T-cell (primary cell): ENCODE measurements at regions of chr10 and their contacts with region 1.

Region 1: GRCh38 chr10:6401562-6402348 is 178.3 kb downstream of the PRKCQ start:
- DNase-seq: peak; percentile 13 to 83 (median 44)
- ATAC-seq: peak; percentile 85 to 93 (median 88)
- H3K4me3 ChIP-seq: no peak overlapping the region
- H3K4me3 Mint-ChIP-seq: peak overlapping the region; percentile 1 to 25 (median 17)
- H3K27ac ChIP-seq: no peak overlapping the region
- H3K27ac Mint-ChIP-seq: peak overlapping the region; percentile 47 to 53
- H3K4me1 ChIP-seq: peaks cover 3 to 7% of the 10 kb centered on the region in 2 experiments
- H3K4me1 Mint-ChIP-seq: peaks cover 21 to 34% (median 29%) of the 10 kb centered on the region in 3 donors
- H3K27me3 ChIP-seq: peaks cover 0 to 3% of the 10 kb centered on the region in 2 experiments
- H3K27me3 Mint-ChIP-seq: peaks cover 0 to 4% of the 10 kb centered on the region in 2 donors

Region 2: DNA sequence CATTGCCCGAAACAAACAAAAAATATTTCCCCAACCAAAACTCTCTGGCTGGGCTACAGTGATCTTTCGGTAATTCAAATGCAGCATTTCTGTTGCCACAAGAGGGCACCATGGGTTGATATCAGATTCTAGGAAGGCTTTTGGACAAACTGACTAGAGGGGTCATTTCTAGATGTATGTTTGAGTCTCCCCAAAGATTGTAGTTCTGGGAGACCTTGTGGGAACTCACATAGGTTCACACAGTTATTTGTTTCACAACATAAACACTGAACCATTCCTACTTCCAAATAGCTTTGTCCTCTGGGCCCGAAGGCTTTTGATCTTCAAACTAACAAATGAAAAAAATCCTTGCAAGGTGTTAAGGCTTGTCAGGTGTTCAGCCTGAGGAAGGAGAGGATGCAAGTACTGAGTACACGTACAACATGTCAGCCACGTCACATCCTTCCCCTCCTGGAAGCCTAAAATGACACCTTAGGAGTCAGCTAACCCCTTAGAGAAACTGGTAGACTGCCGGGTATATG is 387.5 kb before region 1 on chr10:
- CTCF ChIA-PET with region 1: interaction called, 6 to 12 read pairs
- POLR2A ChIA-PET with region 1: no interaction called
- DNase-seq: peak; percentile 32 to 84 (median 66)
- ATAC-seq: peak; percentile 94 to 99 (median 96)
- H3K4me3 ChIP-seq: no peak overlapping the region
- H3K4me3 Mint-ChIP-seq: peak overlapping the region in 1 of 3 donors; percentile 34
- H3K27ac ChIP-seq: peak overlapping the region; percentile 87
- H3K27ac Mint-ChIP-seq: peak overlapping the region; percentile 89 to 93
- H3K4me1 ChIP-seq: peaks cover 6 to 16% of the 10 kb centered on the region in 2 experiments
- H3K4me1 Mint-ChIP-seq: peaks cover 14 to 29% (median 17%) of the 10 kb centered on the region in 3 donors
- H3K27me3 ChIP-seq: no peaks in the 10 kb centered on the region
- H3K27me3 Mint-ChIP-seq: peaks cover 0 to under 1% of the 10 kb centered on the region in 2 donors

Region 3: DNA sequence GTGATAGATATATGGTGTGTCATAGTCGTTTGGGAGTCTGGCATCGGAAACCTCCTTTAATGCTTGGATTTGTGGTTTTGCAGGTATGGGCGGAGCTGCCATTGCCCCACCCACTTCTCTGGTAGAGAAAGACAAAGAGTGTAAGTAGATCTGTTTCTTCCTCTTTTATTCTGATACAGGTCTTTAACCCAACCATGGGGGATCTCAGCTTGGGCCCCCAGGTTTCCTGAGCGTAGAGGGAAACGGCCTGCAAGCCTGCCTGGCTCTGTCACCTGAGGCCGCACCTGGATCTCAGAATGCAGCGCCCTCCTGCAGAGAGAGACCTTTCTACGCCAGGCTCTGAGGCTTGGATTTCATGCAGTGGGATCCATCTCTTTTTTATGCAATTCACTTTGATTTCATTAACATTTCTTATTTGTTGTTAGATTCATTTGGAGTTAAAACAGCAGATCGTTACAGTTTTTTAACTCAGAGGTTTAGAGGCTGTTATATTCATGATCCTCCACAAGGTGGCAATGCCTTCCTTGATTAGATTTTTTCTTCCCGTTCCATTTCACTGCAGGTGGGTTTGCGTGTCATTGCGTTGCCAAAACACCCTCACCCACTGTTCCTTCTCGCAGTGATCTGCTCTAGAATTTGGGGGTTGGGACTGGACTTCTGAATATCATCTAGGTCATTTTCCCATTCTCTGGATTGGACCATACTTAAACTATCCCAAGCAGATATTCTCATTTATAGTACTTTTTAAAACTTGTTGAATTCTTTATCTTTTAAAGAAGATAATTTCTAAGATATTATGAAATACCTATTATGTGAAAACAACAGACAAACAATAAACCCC is 292.9 kb before region 1 on chr10:
- CTCF ChIA-PET with region 1: interaction called, 12 read pairs
- POLR2A ChIA-PET with region 1: no interaction called
- DNase-seq: peak in 24 of 35 experiments; percentile 8 to 79 (median 26)
- ATAC-seq: peak; percentile 59 to 76 (median 62)
- H3K4me3 ChIP-seq: no peak overlapping the region
- H3K4me3 Mint-ChIP-seq: peak overlapping the region; percentile 22 to 53 (median 28)
- H3K27ac ChIP-seq: peak overlapping the region; percentile 26
- H3K27ac Mint-ChIP-seq: peak overlapping the region; percentile 84 to 85
- H3K4me1 ChIP-seq: peaks cover 7 to 10% of the 10 kb centered on the region in 2 experiments
- H3K4me1 Mint-ChIP-seq: peaks cover 18 to 32% (median 29%) of the 10 kb centered on the region in 3 donors
- H3K27me3 ChIP-seq: no peaks in the 10 kb centered on the region
- H3K27me3 Mint-ChIP-seq: no peaks in the 10 kb centered on the region

Region 4: GRCh38 chr10:6171881-6172695 is 229.7 kb before region 1 on chr10:
- CTCF ChIA-PET with region 1: interaction called, 5 to 16 read pairs
- POLR2A ChIA-PET with region 1: no interaction called
- DNase-seq: peak in 1 of 35 experiments; percentile 39
- ATAC-seq: no peak
- H3K4me3 ChIP-seq: no peak overlapping the region
- H3K4me3 Mint-ChIP-seq: peak overlapping the region in 1 of 3 donors; percentile 75
- H3K27ac ChIP-seq: peak overlapping the region; percentile 56
- H3K27ac Mint-ChIP-seq: peak overlapping the region; percentile 90
- H3K4me1 ChIP-seq: peaks cover 25 to 66% of the 10 kb centered on the region in 2 experiments
- H3K4me1 Mint-ChIP-seq: peaks cover 84 to 89% (median 89%) of the 10 kb centered on the region in 3 donors
- H3K27me3 ChIP-seq: no peaks in the 10 kb centered on the region
- H3K27me3 Mint-ChIP-seq: no peaks in the 10 kb centered on the region

Region 5: DNA sequence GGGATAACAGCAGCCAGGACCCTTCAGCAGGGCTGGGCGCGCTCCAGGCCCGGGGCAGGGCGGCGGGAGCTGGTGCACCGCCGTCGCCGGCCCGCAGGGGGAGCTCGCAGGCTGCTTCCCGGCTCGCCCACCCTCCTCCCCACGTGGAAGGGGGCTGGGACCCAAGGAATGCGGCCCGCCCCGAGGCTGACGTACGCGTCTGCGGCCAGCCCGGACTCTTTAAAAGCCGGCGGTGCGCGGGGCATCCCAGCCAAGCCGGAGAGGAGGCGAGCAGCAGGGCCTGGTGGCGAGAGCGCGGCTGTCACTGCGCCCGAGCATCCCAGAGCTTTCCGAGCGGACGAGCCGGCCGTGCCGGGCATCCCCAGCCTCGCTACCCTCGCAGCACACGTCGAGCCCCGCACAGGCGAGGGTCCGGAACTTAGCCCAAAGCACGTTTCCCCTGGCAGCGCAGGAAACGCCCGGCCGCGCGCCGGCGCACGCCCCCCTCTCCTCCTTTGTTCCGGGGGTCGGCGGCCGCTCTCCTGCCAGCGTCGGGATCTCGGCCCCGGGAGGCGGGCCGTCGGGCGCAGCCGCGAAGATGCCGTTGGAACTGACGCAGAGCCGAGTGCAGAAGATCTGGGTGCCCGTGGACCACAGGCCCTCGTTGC is 198.9 kb before region 1 on chr10 and contains the start of gene PFKFB3:
- CTCF ChIA-PET with region 1: interaction called, 10 to 42 read pairs
- POLR2A ChIA-PET with region 1: interaction called in 1 of 2 experiments, 10 read pairs
- DNase-seq: peak; percentile 67 to 94 (median 77)
- ATAC-seq: peak; percentile 58 to 69 (median 64)
- H3K4me3 ChIP-seq: peak within 1 kb of the TSS; percentile 59 to 89
- H3K4me3 Mint-ChIP-seq: peak within 1 kb of the TSS; percentile 88 to 99 (median 95)
- H3K27ac ChIP-seq: peak within 1 kb of the TSS; percentile 34
- H3K27ac Mint-ChIP-seq: peak within 1 kb of the TSS; percentile 88
- H3K4me1 ChIP-seq: peaks cover 17 to 29% of the 10 kb centered on the region in 2 experiments
- H3K4me1 Mint-ChIP-seq: peaks cover 32 to 37% (median 35%) of the 10 kb centered on the region in 3 donors
- H3K27me3 ChIP-seq: no peaks in the 10 kb centered on the region
- H3K27me3 Mint-ChIP-seq: no peaks in the 10 kb centered on the region
- total RNA-seq, gene PFKFB3: 48.7 to 99.2 (median 93.9) TPM

Region 6: DNA sequence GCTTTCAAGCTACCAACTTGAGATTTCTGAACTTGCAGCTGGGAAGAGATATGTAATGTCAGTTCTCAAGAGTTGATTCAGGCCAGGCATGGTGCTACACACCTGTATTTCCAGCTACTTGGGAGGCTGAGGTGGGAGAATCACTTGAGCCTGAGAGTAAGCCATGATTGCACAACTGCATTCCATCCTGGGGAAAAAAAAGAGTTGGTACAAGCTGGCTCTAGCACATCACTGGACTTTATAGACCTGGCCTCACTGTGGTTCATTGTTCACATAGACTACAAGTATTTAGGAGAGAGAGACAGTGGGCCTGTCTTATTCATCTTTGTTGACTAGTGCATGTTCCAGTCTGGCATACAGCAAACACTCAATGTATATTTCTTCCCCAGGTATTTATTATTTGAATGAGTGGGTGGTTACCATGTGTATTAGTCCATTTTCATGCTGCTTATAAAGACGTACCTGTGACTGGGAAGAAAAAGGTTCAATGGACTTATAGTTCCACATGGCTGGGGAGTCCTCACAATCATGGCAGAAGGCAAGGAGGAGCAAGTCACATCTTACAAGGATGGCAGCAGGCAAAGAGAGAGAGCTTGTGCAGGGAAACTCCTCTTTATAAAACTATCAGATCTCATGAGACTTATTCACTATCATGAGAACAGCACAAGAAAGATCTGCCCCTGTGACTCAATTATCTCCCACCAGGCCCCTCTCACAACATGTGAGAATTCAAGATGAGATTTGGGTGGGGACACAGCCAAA is 22.6 kb before region 1 on chr10:
- CTCF ChIA-PET with region 1: no interaction called
- POLR2A ChIA-PET with region 1: no interaction called
- DNase-seq: no peak
- ATAC-seq: no peak
- H3K4me3 ChIP-seq: no peak overlapping the region
- H3K4me3 Mint-ChIP-seq: no peak overlapping the region
- H3K27ac ChIP-seq: no peak overlapping the region
- H3K27ac Mint-ChIP-seq: no peak overlapping the region
- H3K4me1 ChIP-seq: peaks cover 7 to 9% of the 10 kb centered on the region in 2 experiments
- H3K4me1 Mint-ChIP-seq: peaks cover 20 to 29% (median 28%) of the 10 kb centered on the region in 3 donors
- H3K27me3 ChIP-seq: no peaks in the 10 kb centered on the region
- H3K27me3 Mint-ChIP-seq: no peaks in the 10 kb centered on the region

Region 7: DNA sequence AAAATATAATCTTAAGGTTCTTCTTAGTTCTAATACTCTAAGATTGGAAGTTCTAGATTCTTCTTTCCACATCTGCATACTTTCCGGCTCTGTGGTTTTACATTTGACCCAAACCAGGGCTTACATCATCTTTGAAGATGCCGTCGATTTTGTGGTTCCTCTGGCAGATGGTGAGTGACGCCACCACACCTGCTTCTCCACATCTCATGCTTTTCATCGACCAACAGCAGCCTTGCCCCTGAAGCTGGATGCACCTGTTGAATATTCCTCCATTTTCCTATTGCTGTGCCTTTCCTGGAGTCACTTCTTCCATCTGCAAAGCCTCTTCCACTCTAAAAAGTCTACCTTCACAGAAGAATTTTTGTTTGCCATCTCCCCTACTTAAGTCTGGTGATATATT is 57.1 kb after region 1 on chr10:
- CTCF ChIA-PET with region 1: no interaction called
- POLR2A ChIA-PET with region 1: no interaction called
- DNase-seq: peak in 2 of 35 experiments; percentile 25 to 26
- ATAC-seq: peak in 2 of 4 experiments; percentile 32 to 46
- H3K4me3 ChIP-seq: no peak overlapping the region
- H3K4me3 Mint-ChIP-seq: no peak overlapping the region
- H3K27ac ChIP-seq: no peak overlapping the region
- H3K27ac Mint-ChIP-seq: peak overlapping the region; percentile 9 to 81
- H3K4me1 ChIP-seq: no peaks in the 10 kb centered on the region
- H3K4me1 Mint-ChIP-seq: peaks cover 29% of the 10 kb centered on the region in 3 donors
- H3K27me3 ChIP-seq: no peaks in the 10 kb centered on the region
- H3K27me3 Mint-ChIP-seq: no peaks in the 10 kb centered on the region

Region 8: DNA sequence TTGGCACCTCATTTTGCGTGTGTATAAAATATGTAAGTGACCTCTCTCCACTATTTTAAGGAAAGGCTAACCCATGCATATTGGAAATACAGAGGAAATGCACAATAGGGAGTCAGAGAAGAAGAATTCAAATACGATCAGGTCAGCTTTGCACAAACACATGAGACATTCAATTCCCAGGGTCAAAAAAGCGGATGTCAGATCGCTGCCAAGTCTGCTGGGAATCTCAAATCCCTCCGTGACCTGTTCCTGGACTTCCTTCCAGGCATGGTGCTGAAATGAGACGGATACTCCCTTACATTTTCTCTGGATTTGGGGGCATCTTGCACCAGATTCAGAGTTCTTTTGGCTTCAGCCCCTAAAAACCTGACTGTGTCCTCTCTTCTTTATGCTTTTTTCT is 270.2 kb after region 1 on chr10:
- CTCF ChIA-PET with region 1: no interaction called
- POLR2A ChIA-PET with region 1: no interaction called
- DNase-seq: no peak
- ATAC-seq: no peak
- H3K4me3 ChIP-seq: no peak overlapping the region
- H3K4me3 Mint-ChIP-seq: no peak overlapping the region
- H3K27ac ChIP-seq: no peak overlapping the region
- H3K27ac Mint-ChIP-seq: no peak overlapping the region
- H3K4me1 ChIP-seq: no peaks in the 10 kb centered on the region
- H3K4me1 Mint-ChIP-seq: peaks cover 0 to 11% (median 4%) of the 10 kb centered on the region in 3 donors
- H3K27me3 ChIP-seq: no peaks in the 10 kb centered on the region
- H3K27me3 Mint-ChIP-seq: no peaks in the 10 kb centered on the region